Esophagus squamous epithelium (tissue), 5 donors: ENCODE measurements at regions of chr17 and their contacts with region 1.

Region 1: DNA sequence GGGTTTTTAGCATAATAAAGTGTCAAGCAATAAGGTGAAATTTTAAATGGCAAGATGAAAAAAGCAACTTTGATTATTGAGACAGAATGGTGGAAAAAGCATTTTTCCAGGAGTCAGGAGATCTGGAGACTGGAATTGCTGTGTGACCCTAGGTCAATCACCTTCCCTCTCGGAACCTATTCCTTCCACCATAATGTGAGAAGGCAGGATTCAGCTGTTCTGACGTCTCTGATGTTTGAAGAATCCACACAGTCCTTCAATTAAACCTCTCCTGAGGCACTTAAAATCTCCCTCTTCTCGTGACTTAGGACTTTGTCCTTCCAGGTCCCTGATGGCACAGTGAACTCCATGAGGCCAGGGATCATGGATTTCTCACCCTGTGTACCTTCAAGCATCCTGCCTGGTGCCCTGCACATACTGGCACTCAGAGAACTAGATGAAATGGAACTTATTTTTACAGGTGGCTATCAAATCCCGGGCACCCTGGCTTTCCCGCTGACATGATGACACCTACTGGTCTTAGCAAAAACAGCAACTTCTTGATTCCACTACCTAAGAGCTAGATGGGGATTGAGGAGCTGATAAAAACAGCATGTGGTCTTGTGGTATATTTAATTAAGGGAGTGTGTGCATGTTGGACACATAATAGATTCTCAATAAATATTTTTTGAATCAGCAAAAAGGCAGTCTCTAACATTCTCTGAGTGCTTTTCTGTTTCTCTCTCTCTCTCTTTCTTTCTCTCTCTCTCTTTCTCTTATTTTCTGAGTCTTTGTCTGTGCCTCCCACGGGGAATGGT is 2.3 kb upstream of the CCDC182 start:
- DNase-seq: no peak
- H3K4me3 ChIP-seq: no peak overlapping the region
- H3K27ac ChIP-seq: no peak overlapping the region
- H3K4me1 ChIP-seq: no peaks in the 10 kb centered on the region
- H3K27me3 ChIP-seq: peaks cover 0 to 50% (median 0%) of the 10 kb centered on the region in 4 donors
- CTCF ChIP-seq: peak; percentile 36 to 73 (median 64)
- POLR2A ChIP-seq: no peak

Region 2: GRCh38 chr17:57130761-57131461 is 616.5 kb before region 1 on chr17:
- intact Hi-C with region 1: loop called (anchors 10 kb)
- DNase-seq: peak; percentile 17
- H3K4me3 ChIP-seq: peak overlapping the region in 1 of 4 donors; percentile 43
- H3K27ac ChIP-seq: no peak overlapping the region
- H3K4me1 ChIP-seq: peaks cover 0 to 9% (median 0%) of the 10 kb centered on the region in 3 donors
- H3K27me3 ChIP-seq: no peaks in the 10 kb centered on the region
- CTCF ChIP-seq: peak; percentile 65 to 93 (median 70)
- POLR2A ChIP-seq: no peak

Region 3: DNA sequence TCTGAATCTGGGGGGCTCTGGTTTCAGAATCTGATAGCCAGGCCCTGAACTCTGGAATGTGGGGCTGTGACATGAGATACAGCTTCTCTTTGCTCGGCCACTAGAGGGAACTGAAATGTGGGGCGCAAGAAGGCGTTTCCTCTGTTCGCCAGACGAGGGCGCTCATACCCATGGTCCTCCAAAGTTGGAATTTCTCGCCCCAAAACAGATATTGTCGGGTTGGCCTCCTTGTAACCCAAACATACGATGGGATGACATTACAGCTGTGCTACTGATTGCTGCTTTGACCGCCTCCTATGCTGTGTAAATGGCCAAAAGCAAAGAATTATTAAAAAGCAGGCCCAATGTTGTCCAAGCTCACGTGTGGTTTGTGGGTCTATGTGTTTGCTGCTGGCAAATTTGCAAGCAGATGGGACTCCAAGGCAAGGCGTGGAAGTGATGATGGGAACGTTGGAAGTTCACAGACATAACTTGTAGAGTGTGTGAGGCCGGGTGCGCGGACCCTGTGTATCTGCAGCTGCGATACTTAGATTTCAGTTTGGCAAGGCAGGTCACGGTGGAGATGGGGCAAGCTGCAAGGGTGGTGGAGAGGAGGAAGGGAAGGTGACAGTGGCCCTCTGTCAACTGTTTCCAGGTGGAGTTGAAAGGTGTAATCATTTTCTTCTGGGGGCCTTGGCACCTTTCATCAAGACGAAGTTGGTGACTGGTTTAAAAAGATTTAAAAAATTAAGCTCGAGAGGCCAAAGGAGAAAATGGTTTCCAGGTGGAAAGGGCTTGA is 504.1 kb before region 1 on chr17:
- intact Hi-C with region 1: loop called (anchors 5 kb)
- DNase-seq: no peak
- H3K4me3 ChIP-seq: no peak overlapping the region
- H3K27ac ChIP-seq: no peak overlapping the region
- H3K4me1 ChIP-seq: no peaks in the 10 kb centered on the region
- H3K27me3 ChIP-seq: peaks cover 0 to 15% (median 0%) of the 10 kb centered on the region in 4 donors
- CTCF ChIP-seq: peak; percentile 93 to 99 (median 98)
- POLR2A ChIP-seq: no peak

Region 4: GRCh38 chr17:57597531-57598453 is 149.6 kb before region 1 on chr17:
- intact Hi-C with region 1: loop called (anchors 10 kb)
- DNase-seq: no peak
- H3K4me3 ChIP-seq: no peak overlapping the region
- H3K27ac ChIP-seq: no peak overlapping the region
- H3K4me1 ChIP-seq: peaks cover 0 to 15% (median 3%) of the 10 kb centered on the region in 3 donors
- H3K27me3 ChIP-seq: no peaks in the 10 kb centered on the region
- CTCF ChIP-seq: peak; percentile 54 to 86 (median 78)
- POLR2A ChIP-seq: no peak

Region 5: DNA sequence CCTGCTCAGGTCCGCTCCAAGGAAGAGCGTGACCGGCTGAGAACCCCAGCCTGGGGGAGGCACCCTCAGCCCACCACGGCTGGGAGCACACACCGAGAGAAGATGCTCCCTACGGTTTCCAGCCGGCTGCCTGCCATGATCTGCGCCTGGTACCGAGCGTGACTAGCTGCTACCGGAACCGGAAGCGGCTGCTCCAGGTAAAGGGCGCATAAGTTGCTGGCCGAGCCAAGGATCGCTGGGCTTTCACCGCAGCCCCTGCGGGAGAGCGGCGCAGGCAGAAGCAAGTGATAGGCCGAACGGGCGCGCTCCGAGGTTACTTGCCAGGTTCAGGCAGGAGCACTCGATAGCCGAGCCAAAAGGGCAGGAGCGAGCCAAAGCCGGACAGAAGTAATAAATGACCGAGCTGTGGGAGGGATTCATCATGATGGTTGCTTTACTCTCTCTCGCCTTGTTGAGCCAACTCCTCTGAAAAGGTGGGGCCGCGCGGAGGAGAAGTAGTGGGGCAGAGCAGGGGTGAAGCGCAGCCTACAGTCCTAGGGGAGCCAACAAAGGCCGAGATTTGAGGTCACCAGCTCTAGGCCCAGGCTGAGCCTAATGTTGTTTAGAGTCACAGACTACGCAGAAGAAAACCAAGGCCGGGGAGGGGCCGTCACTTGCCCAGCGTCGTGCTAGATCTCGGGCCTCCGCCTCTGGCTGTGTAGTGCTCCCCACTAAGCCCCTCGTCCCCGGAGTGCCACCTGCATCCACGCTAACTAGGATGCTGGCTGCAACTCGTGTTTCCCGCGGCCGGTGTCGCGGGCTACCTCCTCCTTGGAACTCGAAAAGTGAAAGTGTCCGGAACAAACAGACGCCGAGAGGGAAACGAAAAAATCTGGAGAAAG is 102.7 kb after region 1 on chr17 and contains the start of gene MRPS23:
- intact Hi-C with region 1: no loop called
- DNase-seq: peak; percentile 93
- H3K4me3 ChIP-seq: peak within 1 kb of the TSS; percentile 61 to 89 (median 74)
- H3K27ac ChIP-seq: peak within 1 kb of the TSS; percentile 83 to 95 (median 90)
- H3K4me1 ChIP-seq: peaks cover 7 to 56% (median 26%) of the 10 kb centered on the region in 3 donors
- H3K27me3 ChIP-seq: no peaks in the 10 kb centered on the region
- CTCF ChIP-seq: peak in 1 of 6 experiments; percentile 55
- POLR2A ChIP-seq: peak in 3 of 4 donors; percentile 66 to 85 (median 78)
- total RNA-seq, gene MRPS23: 9.9 to 25.2 (median 20.8) TPM